ENCODE measurements at regions of chr15 and their contacts with region 1.

Region 1: GRCh38 chr15:34783991-34784390 is 11.4 kb downstream of the ACTC1 start:
- DNase-seq: no peak
- ATAC-seq: no peak
- H3K4me3 ChIP-seq: no peak overlapping the region
- H3K27ac ChIP-seq: no peak overlapping the region
- H3K4me1 ChIP-seq: no peaks in the 10 kb centered on the region
- H3K27me3 ChIP-seq: peaks cover 15% of the 10 kb centered on the region
- CTCF ChIP-seq: no peak
- POLR2A ChIP-seq: no peak
- RAD21 ChIP-seq: no peak

Region 2: DNA sequence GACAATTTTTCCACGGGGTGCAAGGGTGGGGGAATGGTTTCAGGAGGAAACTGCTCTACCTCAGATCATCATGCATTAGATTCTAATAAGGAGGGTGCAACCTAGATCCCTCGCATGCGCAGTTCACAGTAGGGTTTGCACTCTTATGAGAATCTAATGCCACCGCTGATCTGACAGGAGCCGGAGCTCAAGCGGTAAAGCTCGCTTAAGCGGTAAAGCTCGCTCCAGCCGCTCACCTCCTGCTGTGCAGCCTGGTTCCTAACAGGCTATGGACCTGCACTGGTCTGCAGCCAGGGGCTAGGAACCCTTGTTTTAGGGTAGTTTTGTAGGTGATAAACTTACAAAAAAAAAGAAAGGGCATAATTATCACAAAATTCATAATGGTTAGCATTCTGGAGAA is 1527.1 kb before region 1 on chr15:
- CTCF ChIA-PET with region 1: no interaction called
- POLR2A ChIA-PET with region 1: no interaction called
- dilution Hi-C with region 1: no loop called
- in situ Hi-C with region 1: no loop called
- intact Hi-C with region 1: no loop called
- DNase-seq: no peak
- ATAC-seq: no peak
- H3K4me3 ChIP-seq: no peak overlapping the region
- H3K27ac ChIP-seq: no peak overlapping the region
- H3K4me1 ChIP-seq: no peaks in the 10 kb centered on the region
- H3K27me3 ChIP-seq: peaks cover 4% of the 10 kb centered on the region
- CTCF ChIP-seq: no peak
- POLR2A ChIP-seq: no peak
- RAD21 ChIP-seq: no peak

Region 3: GRCh38 chr15:34737477-34737876 is 46.5 kb before region 1 on chr15:
- CTCF ChIA-PET with region 1: no interaction called
- POLR2A ChIA-PET with region 1: no interaction called
- dilution Hi-C with region 1: no loop called
- in situ Hi-C with region 1: no loop called
- intact Hi-C with region 1: no loop called
- DNase-seq: peak; percentile 40
- ATAC-seq: peak; percentile 59
- H3K4me3 ChIP-seq: no peak overlapping the region
- H3K27ac ChIP-seq: no peak overlapping the region
- H3K4me1 ChIP-seq: no peaks in the 10 kb centered on the region
- H3K27me3 ChIP-seq: peaks cover 38% of the 10 kb centered on the region
- CTCF ChIP-seq: no peak
- POLR2A ChIP-seq: no peak
- RAD21 ChIP-seq: no peak

Region 4: GRCh38 chr15:34749691-34750090 is 34.3 kb before region 1 on chr15:
- CTCF ChIA-PET with region 1: no interaction called
- POLR2A ChIA-PET with region 1: no interaction called
- dilution Hi-C with region 1: no loop called
- in situ Hi-C with region 1: no loop called
- intact Hi-C with region 1: loop called (anchors 5 kb)
- DNase-seq: no peak
- ATAC-seq: no peak
- H3K4me3 ChIP-seq: no peak overlapping the region
- H3K27ac ChIP-seq: no peak overlapping the region
- H3K4me1 ChIP-seq: peaks cover 2% of the 10 kb centered on the region; the same call in 1 of the 2 replicates
- H3K27me3 ChIP-seq: peaks cover 33% of the 10 kb centered on the region
- CTCF ChIP-seq: no peak
- POLR2A ChIP-seq: no peak
- RAD21 ChIP-seq: no peak

Region 5: GRCh38 chr15:34760909-34761308 is 23.1 kb before region 1 on chr15:
- CTCF ChIA-PET with region 1: no interaction called
- POLR2A ChIA-PET with region 1: no interaction called
- dilution Hi-C with region 1: no loop called
- in situ Hi-C with region 1: no loop called
- intact Hi-C with region 1: loop called (anchors 1 kb)
- DNase-seq: no peak
- ATAC-seq: no peak
- H3K4me3 ChIP-seq: no peak overlapping the region
- H3K27ac ChIP-seq: no peak overlapping the region
- H3K4me1 ChIP-seq: no peaks in the 10 kb centered on the region
- H3K27me3 ChIP-seq: peaks cover 28% of the 10 kb centered on the region
- CTCF ChIP-seq: no peak
- POLR2A ChIP-seq: no peak
- RAD21 ChIP-seq: no peak

Region 6: DNA sequence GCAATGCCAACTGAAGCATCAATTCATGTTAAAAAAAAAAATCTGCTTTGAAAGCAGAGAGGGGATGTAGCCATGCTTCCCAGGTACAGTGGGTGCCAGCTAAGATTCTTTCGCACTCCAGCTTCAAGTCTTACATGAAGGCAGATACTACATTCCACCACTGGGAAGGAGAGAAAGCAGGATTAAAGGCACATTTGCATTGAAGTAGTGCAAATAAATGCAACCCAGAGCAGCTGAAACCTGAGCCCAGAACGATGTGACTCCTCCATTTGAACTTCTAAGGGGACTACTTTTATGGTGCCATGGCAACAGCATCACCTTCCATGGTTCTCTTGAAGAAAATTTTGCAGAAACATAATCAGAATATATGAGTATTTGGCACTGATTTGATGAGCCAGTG is 10.1 kb before region 1 on chr15:
- CTCF ChIA-PET with region 1: no interaction called
- POLR2A ChIA-PET with region 1: no interaction called
- dilution Hi-C with region 1: no loop called
- in situ Hi-C with region 1: no loop called
- intact Hi-C with region 1: no loop called
- DNase-seq: no peak
- ATAC-seq: no peak
- H3K4me3 ChIP-seq: no peak overlapping the region
- H3K27ac ChIP-seq: no peak overlapping the region
- H3K4me1 ChIP-seq: no peaks in the 10 kb centered on the region
- H3K27me3 ChIP-seq: peaks cover 24% of the 10 kb centered on the region
- CTCF ChIP-seq: no peak
- POLR2A ChIP-seq: no peak
- RAD21 ChIP-seq: no peak